GM12878 (cell line): ENCODE measurements at regions of chr16 and their contacts with region 1.

Region 1: GRCh38 chr16:12095275-12096156 is 119.0 kb downstream of the SNX29 start:
- DNase-seq: no peak
- ATAC-seq: peak; percentile 82
- H3K4me3 ChIP-seq: no peak overlapping the region
- H3K27ac ChIP-seq: no peak overlapping the region
- H3K4me1 ChIP-seq: no peaks in the 10 kb centered on the region
- H3K27me3 ChIP-seq: no peaks in the 10 kb centered on the region
- CTCF ChIP-seq: peak; percentile 77 to 84 (median 84)
- EP300 ChIP-seq: no peak
- POLR2A ChIP-seq: no peak
- RAD21 ChIP-seq: peak; percentile 74

Region 2: GRCh38 chr16:12027558-12028287 is 67.8 kb before region 1 on chr16:
- CTCF ChIA-PET with region 1: no interaction called
- POLR2A ChIA-PET with region 1: no interaction called
- RAD21 ChIA-PET with region 1: no interaction called
- SMC1A ChIA-PET with region 1: no interaction called
- in situ Hi-C with region 1: no loop called
- intact Hi-C with region 1: no loop called
- DNase-seq: no peak
- ATAC-seq: peak; percentile 24; the same call in 2 of the 3 replicates
- H3K4me3 ChIP-seq: no peak overlapping the region
- H3K27ac ChIP-seq: no peak overlapping the region
- H3K4me1 ChIP-seq: peaks cover 20% of the 10 kb centered on the region
- H3K27me3 ChIP-seq: no peaks in the 10 kb centered on the region
- CTCF ChIP-seq: no peak
- EP300 ChIP-seq: no peak
- POLR2A ChIP-seq: no peak
- RAD21 ChIP-seq: no peak

Region 3: GRCh38 chr16:12079412-12079965 is 16.0 kb before region 1 on chr16:
- CTCF ChIA-PET with region 1: interaction called, 26 read pairs
- POLR2A ChIA-PET with region 1: no interaction called
- RAD21 ChIA-PET with region 1: no interaction called
- SMC1A ChIA-PET with region 1: interaction called, 4 read pairs
- in situ Hi-C with region 1: no loop called
- intact Hi-C with region 1: no loop called
- DNase-seq: no peak
- ATAC-seq: no peak
- H3K4me3 ChIP-seq: no peak overlapping the region
- H3K27ac ChIP-seq: peak overlapping the region; percentile 76
- H3K4me1 ChIP-seq: peaks cover 8% of the 10 kb centered on the region
- H3K27me3 ChIP-seq: no peaks in the 10 kb centered on the region
- CTCF ChIP-seq: no peak
- EP300 ChIP-seq: no peak
- POLR2A ChIP-seq: no peak
- RAD21 ChIP-seq: no peak

Region 4: DNA sequence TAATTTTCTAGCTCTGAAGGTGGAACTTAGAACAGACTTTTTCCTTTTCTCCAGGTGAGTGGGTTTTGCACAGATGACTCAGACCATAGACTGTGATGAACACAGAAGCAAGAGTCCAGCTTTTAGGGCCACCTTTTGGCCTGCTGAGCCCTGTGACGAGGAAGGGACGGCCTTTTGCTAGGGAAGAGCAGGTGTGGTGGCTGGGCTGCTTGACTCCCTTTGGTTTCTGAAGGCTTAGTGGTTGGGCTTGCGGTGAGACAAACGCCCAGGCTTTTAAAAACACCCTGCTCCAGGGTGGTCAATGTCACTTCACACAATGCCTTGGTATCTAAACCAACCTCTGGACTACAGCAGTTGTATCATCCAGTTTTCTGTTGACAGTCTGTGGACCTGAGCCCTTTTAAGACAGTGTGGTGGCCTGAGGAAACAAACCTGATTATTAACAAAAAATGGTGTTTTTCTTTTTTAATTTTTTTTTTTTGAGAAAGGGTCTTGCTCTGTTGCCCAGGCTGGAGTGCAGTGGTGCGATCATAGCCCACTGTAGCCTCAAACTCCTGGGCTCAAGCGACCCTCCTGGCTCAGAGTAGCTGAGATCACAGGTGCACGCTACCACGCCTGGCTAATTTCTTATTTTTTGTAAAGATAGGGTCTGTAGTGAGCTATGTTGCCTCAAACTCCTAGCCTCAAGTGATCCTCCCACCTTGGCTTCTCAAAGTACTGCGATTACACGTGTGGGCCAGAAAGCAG is 15.0 kb after region 1 on chr16:
- CTCF ChIA-PET with region 1: interaction called, 38 read pairs
- POLR2A ChIA-PET with region 1: no interaction called
- RAD21 ChIA-PET with region 1: interaction called, 3 read pairs
- SMC1A ChIA-PET with region 1: interaction called, 5 read pairs
- in situ Hi-C with region 1: no loop called
- intact Hi-C with region 1: no loop called
- DNase-seq: no peak
- ATAC-seq: no peak
- H3K4me3 ChIP-seq: no peak overlapping the region
- H3K27ac ChIP-seq: no peak overlapping the region
- H3K4me1 ChIP-seq: no peaks in the 10 kb centered on the region
- H3K27me3 ChIP-seq: no peaks in the 10 kb centered on the region
- CTCF ChIP-seq: no peak
- EP300 ChIP-seq: no peak
- POLR2A ChIP-seq: no peak
- RAD21 ChIP-seq: no peak

Region 5: DNA sequence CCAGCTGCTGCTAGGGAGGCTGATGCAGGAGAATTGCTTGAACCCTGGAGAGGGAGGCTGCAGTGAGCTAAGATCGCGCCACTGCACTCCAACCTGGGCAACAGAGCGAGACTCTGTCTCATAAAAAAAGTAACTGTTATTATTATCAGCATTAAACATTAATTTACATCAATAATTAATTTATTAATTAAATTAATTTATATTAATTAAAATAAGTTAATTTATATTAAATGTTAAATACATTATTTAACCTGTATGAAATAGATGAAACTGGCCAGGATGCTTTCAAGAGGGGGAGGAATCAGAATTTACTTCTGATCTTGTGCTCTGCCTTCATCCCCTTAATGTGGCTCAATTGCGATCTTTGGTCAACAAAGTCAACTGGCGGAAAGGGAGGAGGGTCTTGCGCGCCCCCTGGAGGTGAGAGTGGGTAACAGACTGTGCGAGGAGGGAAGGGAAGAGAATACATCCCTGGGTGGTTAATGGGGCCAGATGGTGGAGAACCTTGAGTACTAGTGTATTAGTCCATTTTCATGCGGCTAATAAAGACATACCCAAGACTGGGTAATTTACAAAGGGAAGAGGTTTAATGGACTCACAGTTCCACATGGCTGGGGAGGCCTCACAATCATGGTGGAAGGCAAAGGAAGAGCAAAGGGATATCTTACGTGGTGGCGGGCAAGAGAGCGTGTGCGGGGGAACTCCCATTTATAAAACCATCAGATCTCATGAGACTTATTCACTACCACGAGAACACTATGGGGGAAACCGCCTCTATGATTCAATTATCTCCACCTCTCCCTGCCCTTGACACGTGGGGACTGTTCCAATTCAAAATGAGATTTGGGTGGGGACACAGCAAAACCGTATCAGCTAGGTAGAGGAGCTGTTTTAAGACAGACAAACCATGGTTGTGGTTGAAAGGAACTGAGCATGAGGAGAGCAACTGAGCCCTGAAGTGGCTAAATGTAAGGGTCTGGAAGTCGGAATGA is 723.9 kb after region 1 on chr16:
- CTCF ChIA-PET with region 1: no interaction called
- POLR2A ChIA-PET with region 1: no interaction called
- RAD21 ChIA-PET with region 1: no interaction called
- SMC1A ChIA-PET with region 1: no interaction called
- in situ Hi-C with region 1: loop called (anchors 10 kb)
- intact Hi-C with region 1: no loop called
- DNase-seq: peak; percentile 24
- ATAC-seq: peak; percentile 85
- H3K4me3 ChIP-seq: no peak overlapping the region
- H3K27ac ChIP-seq: no peak overlapping the region
- H3K4me1 ChIP-seq: no peaks in the 10 kb centered on the region
- H3K27me3 ChIP-seq: no peaks in the 10 kb centered on the region
- CTCF ChIP-seq: peak; percentile 58 to 85 (median 76)
- EP300 ChIP-seq: no peak
- POLR2A ChIP-seq: no peak
- RAD21 ChIP-seq: peak; percentile 95

Region 6: GRCh38 chr16:13767215-13767614 is 1671.7 kb after region 1 on chr16:
- CTCF ChIA-PET with region 1: interaction called, 10 read pairs
- POLR2A ChIA-PET with region 1: no interaction called
- RAD21 ChIA-PET with region 1: no interaction called
- SMC1A ChIA-PET with region 1: interaction called, 5 read pairs
- in situ Hi-C with region 1: no loop called
- intact Hi-C with region 1: no loop called
- DNase-seq: no peak
- ATAC-seq: peak; percentile 42; the same call in 2 of the 3 replicates
- H3K4me3 ChIP-seq: no peak overlapping the region
- H3K27ac ChIP-seq: no peak overlapping the region
- H3K4me1 ChIP-seq: no peaks in the 10 kb centered on the region
- H3K27me3 ChIP-seq: no peaks in the 10 kb centered on the region
- CTCF ChIP-seq: peak; percentile 10 to 42 (median 28); a peak in 3 of 6 replicates
- EP300 ChIP-seq: no peak
- POLR2A ChIP-seq: no peak
- RAD21 ChIP-seq: peak; percentile 58